Left cardiac atrium (tissue), 4 donors: ENCODE measurements at regions of chr2 and their contacts with region 1.

Region 1: GRCh38 chr2:95185197-95185596 is 19.6 kb downstream of the ZNF2 start:
- DNase-seq: no peak
- ATAC-seq: no peak

Region 2: DNA sequence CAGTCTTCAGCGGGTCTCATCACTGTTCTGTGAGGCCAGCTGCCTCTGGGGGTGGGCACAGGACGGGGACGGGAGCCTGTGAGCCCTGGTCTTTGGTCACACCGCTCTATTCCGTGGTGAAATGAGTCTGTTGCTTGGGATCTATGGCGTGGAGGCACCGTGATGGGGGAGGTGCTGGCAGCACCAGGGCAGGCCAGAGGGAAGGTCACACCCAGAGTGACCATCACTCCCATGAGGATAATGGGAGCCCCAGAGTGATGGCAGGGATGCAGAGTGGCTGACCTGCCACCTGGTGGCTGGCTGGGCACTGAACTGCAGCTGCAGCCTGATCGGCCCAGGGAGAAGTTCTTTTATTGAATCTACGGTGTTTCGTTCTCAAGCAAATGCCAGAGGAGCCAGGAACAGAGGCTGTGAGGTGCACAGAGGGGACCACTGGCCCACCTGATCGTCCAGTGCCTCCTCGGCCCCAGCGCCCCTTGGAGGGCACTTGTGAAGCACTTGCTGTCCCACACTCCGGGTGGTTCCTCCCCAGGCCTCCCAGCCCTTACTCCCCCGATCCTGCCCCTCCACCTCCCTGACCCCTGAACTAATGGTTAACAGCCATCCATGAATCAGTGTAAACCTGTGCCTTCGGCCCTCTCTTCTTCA is 129.9 kb after region 1 on chr2:
- intact Hi-C with region 1: loop called (anchors 10 kb)
- DNase-seq: no peak
- ATAC-seq: peak in 1 of 2 donors; percentile 35